ENCODE measurements at regions of chr7 and their contacts with region 1.

Region 1: DNA sequence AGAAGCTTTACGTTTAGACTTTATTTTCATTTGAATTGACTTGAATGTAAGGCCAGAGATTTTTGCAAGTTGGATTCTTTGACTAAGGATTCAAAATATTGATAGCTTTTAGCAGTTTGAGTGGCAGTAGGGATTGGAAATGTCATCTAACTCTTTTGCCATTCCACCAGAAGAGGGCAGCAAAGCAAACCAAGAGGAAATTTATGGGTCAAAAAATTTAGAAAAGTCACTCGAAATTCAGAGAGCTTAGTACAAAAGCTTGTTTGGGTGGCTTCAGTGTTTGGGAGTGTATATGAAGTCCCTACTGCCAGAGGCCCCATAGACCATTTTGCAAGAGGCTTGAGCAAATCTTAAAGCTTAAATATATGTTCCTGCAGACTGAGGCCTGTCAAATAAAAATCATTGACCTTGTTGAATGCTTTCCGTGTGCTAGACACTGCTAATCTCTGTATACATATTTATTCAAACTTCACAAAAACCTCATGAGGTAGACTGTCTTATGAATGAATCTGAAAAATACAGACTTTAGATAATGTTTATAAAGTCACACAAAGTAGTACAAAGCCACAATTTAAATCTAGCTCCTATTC is 44.6 kb upstream of the RSBN1L start:
- DNase-seq: no peak
- H3K4me3 ChIP-seq: no peak overlapping the region
- CTCF ChIP-seq: peak; percentile 55

Region 2: GRCh38 chr7:77667459-77668086 is 15.9 kb after region 1 on chr7:
- CTCF ChIA-PET with region 1: interaction called, 29 read pairs
- POLR2A ChIA-PET with region 1: no interaction called
- DNase-seq: no peak
- H3K4me3 ChIP-seq: no peak overlapping the region
- CTCF ChIP-seq: no peak

Region 3: GRCh38 chr7:77702513-77702912 is 50.8 kb after region 1 on chr7:
- CTCF ChIA-PET with region 1: interaction called, 11 read pairs
- POLR2A ChIA-PET with region 1: no interaction called
- DNase-seq: no peak
- H3K4me3 ChIP-seq: no peak overlapping the region
- CTCF ChIP-seq: no peak

Region 4: DNA sequence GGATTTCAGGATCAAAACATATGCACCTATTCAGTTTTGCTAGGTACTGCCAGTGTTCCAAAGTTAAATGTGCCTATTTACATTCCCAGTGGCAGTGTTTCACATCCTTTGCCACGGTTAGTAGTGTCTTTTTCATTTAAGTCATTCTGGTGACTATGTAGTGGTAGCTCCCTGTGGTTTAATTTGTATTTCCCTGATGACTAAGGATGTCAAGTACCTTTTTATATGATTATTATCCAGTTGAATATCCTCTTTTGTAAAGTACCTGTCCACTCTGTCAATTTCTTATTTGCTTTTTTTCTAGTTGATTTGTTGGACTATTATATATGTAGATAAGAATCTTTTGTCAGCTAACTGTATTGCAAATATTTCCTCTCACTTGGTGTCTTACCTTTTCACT is 101.5 kb after region 1 on chr7:
- CTCF ChIA-PET with region 1: interaction called, 39 read pairs
- POLR2A ChIA-PET with region 1: no interaction called
- DNase-seq: no peak
- H3K4me3 ChIP-seq: no peak overlapping the region
- CTCF ChIP-seq: no peak

Region 5: DNA sequence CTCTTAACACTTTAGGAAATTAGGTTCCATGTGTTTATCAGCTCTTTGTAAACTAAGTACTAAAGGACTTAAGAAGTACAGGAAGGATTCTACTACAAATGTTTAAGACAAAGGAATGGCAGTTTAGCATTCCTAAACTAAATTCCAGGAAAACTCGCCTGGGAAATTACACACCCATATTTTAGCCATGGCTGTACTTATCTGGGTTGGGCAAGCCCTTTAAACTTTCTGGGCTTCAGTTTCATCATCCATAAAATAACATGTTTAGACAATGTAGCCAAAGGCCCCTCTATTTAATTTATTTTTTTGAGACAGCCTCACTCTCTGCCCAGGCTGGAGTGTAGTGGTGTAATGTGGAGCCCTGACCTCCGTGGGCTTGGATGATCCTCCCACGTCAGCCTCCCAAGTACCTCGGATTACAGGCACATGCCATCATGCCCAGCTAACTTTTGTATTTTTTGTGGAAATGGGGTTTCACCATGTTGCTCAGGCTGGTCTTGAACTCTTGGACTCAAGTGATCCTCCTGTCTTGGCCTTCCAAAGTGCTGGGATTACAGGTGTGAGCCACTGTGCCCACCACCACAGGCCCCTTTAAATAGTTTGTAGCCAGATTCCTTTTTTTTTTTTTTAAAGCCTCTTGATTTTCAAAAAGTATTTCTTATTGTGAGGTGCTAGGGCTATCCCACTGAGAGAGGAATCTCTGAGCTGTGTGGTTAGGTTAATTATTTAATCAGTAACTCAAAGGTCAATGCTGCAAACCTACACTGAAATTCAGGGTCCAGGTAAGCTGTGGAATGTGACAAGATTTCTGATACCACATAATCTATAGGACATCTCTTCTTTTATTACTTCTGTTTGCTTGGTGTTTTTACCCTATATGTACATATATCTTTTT is 114.5 kb after region 1 on chr7:
- CTCF ChIA-PET with region 1: interaction called, 203 read pairs
- POLR2A ChIA-PET with region 1: no interaction called
- DNase-seq: no peak
- H3K4me3 ChIP-seq: no peak overlapping the region
- CTCF ChIP-seq: no peak